CD8-positive, alpha-beta T cell (primary cell): ENCODE measurements at regions of chr3 and their contacts with region 1.

Region 1: GRCh38 chr3:114152519-114153151 is 26.2 kb downstream of the DRD3 start:
- DNase-seq: peak; percentile 76 to 91 (median 87)
- ATAC-seq: peak; percentile 100
- H3K4me3 ChIP-seq: peak overlapping the region; percentile 46 to 50
- H3K4me3 Mint-ChIP-seq: peak overlapping the region; percentile 73
- H3K27ac ChIP-seq: peak overlapping the region in 1 of 2 experiments; percentile 47
- H3K27ac Mint-ChIP-seq: no peak overlapping the region
- H3K4me1 ChIP-seq: peaks cover 8% of the 10 kb centered on the region
- H3K4me1 Mint-ChIP-seq: peaks cover 10% of the 10 kb centered on the region
- H3K27me3 ChIP-seq: no peaks in the 10 kb centered on the region
- H3K27me3 Mint-ChIP-seq: no peaks in the 10 kb centered on the region
- CTCF ChIP-seq: peak; percentile 99

Region 2: DNA sequence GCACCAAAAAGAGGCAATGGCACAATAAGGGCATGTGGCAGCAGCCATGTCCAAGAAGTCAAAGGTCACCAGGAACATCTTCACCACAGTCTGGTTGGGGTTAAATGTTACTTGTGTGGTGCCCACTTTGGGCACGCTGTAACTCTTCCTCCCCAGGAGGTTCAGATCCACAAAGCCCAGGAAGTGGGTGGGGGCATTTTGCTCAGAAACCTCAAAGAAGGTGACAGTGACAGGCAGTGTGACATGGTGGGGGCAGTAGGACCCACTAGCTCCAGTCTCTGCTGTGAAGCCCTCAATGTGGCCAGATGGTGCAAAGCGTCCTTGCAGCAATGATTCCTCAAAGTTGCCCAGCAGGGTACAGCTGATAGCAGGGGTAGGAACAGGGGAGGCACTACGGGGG is 79.0 kb after region 1 on chr3:
- CTCF ChIA-PET with region 1: interaction called, 3 read pairs
- POLR2A ChIA-PET with region 1: no interaction called
- intact Hi-C with region 1: loop called in 1 of 2 experiments (anchors 5 kb)
- DNase-seq: peak in 8 of 9 experiments; percentile 15 to 88 (median 70)
- ATAC-seq: peak; percentile 88
- H3K4me3 ChIP-seq: peak overlapping the region in 1 of 2 experiments; percentile 38
- H3K4me3 Mint-ChIP-seq: peak overlapping the region; percentile 65
- H3K27ac ChIP-seq: peak overlapping the region; percentile 58 to 85
- H3K27ac Mint-ChIP-seq: peak overlapping the region; percentile 96
- H3K4me1 ChIP-seq: peaks cover 89% of the 10 kb centered on the region
- H3K4me1 Mint-ChIP-seq: peaks cover 91% of the 10 kb centered on the region
- H3K27me3 ChIP-seq: no peaks in the 10 kb centered on the region
- H3K27me3 Mint-ChIP-seq: no peaks in the 10 kb centered on the region
- CTCF ChIP-seq: no peak

Region 3: DNA sequence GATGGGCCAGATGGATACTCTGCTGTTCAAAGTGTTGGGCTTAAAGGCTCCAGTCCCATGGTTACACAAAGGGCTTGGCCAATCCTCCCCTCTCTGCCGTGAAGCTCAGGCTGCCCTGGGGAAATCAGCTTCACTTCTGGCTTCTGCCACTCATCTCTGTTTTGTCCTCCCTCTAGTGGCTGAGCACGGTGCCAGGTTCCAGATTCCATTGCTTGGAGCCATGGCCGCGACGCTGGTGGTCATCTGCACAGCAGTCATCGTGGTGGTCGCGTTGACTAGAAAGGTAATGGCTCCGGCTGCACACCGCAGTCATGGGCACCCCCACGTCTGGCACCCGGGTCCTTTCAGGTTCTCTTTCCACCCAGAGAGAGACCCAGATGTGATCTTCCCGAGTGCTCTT is 146.8 kb after region 1 on chr3:
- CTCF ChIA-PET with region 1: interaction called, 53 read pairs
- POLR2A ChIA-PET with region 1: no interaction called
- intact Hi-C with region 1: loop called (anchors 1 to 2 kb)
- DNase-seq: peak in 5 of 9 experiments; percentile 30 to 77 (median 46)
- ATAC-seq: peak; percentile 59
- H3K4me3 ChIP-seq: peak overlapping the region in 1 of 2 experiments; percentile 55
- H3K4me3 Mint-ChIP-seq: peak overlapping the region; percentile 72
- H3K27ac ChIP-seq: peak overlapping the region in 1 of 2 experiments; percentile 89
- H3K27ac Mint-ChIP-seq: peak overlapping the region; percentile 80
- H3K4me1 ChIP-seq: peaks cover 11% of the 10 kb centered on the region
- H3K4me1 Mint-ChIP-seq: peaks cover 45% of the 10 kb centered on the region
- H3K27me3 ChIP-seq: no peaks in the 10 kb centered on the region
- H3K27me3 Mint-ChIP-seq: no peaks in the 10 kb centered on the region
- CTCF ChIP-seq: peak; percentile 38

Region 4: GRCh38 chr3:114336122-114336697 is 183.6 kb after region 1 on chr3:
- CTCF ChIA-PET with region 1: interaction called, 3 read pairs
- POLR2A ChIA-PET with region 1: no interaction called
- intact Hi-C with region 1: loop called (anchors 1 to 5 kb)
- DNase-seq: peak in 1 of 9 experiments; percentile 36
- ATAC-seq: no peak
- H3K4me3 ChIP-seq: no peak overlapping the region
- H3K4me3 Mint-ChIP-seq: no peak overlapping the region
- H3K27ac ChIP-seq: no peak overlapping the region
- H3K27ac Mint-ChIP-seq: no peak overlapping the region
- H3K4me1 ChIP-seq: no peaks in the 10 kb centered on the region
- H3K4me1 Mint-ChIP-seq: peaks cover 48% of the 10 kb centered on the region
- H3K27me3 ChIP-seq: no peaks in the 10 kb centered on the region
- H3K27me3 Mint-ChIP-seq: no peaks in the 10 kb centered on the region
- CTCF ChIP-seq: peak; percentile 61

Region 5: GRCh38 chr3:114362815-114363214 is 210.2 kb after region 1 on chr3:
- CTCF ChIA-PET with region 1: interaction called, 12 read pairs
- POLR2A ChIA-PET with region 1: no interaction called
- intact Hi-C with region 1: no loop called
- DNase-seq: peak in 2 of 9 experiments; percentile 19 to 37
- ATAC-seq: no peak
- H3K4me3 ChIP-seq: no peak overlapping the region
- H3K4me3 Mint-ChIP-seq: no peak overlapping the region
- H3K27ac ChIP-seq: no peak overlapping the region
- H3K27ac Mint-ChIP-seq: no peak overlapping the region
- H3K4me1 ChIP-seq: no peaks in the 10 kb centered on the region
- H3K4me1 Mint-ChIP-seq: no peaks in the 10 kb centered on the region
- H3K27me3 ChIP-seq: no peaks in the 10 kb centered on the region
- H3K27me3 Mint-ChIP-seq: no peaks in the 10 kb centered on the region
- CTCF ChIP-seq: peak; percentile 14